Common myeloid progenitor, CD34-positive (primary cell): ENCODE measurements at regions of chr16 and their contacts with region 1.

Region 1: GRCh38 chr16:19517418-19518089 is 4.3 kb downstream of the GDE1 start:
- DNase-seq: peak in 2 of 3 donors; percentile 28 to 56
- H3K4me3 ChIP-seq: no peak overlapping the region
- H3K27ac ChIP-seq: no peak overlapping the region
- H3K4me1 ChIP-seq: peaks cover 13 to 38% (median 28%) of the 10 kb centered on the region in 4 experiments
- H3K27me3 ChIP-seq: no peaks in the 10 kb centered on the region

Region 2: GRCh38 chr16:19474617-19475016 is 42.9 kb before region 1 on chr16:
- CTCF ChIA-PET with region 1: no interaction called
- POLR2A ChIA-PET with region 1: no interaction called
- DNase-seq: no peak
- H3K4me3 ChIP-seq: no peak overlapping the region
- H3K27ac ChIP-seq: no peak overlapping the region
- H3K4me1 ChIP-seq: no peaks in the 10 kb centered on the region
- H3K27me3 ChIP-seq: peaks cover 0 to 2% (median 0%) of the 10 kb centered on the region in 5 experiments

Region 3: DNA sequence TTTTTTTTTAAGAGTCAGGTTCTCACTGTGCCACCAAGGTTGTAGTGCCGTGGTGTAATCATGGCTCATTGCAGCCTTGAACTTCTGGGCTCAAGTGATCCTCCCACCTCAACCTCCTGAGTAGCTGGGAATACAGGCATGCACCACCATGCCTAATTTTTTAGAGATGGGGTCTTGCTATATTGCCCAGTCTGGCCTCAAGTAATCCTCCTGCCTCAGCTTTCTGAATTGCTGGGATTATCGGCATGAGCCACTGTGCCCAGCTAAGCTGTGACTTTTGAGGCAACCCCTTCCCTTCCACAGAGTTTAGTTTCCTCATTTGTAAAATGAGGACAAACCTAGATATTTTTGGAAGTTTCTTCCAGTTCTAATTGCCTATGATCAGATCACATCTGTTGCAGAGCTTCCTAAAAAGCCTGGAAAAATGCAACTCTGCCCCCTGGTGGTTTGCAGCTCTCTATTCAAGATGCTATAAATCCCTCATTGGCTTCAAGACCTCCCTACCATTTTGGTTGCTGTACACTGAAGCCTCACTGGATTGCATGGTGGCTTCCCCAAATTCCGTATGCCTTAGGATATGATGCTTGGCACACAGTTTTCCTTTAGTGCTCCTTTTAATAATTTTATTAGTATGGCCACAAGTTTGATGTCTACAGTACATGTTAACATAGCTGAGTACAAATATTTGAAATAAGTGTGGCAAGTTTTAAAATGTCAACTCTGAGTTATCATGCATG is 15.0 kb before region 1 on chr16:
- CTCF ChIA-PET with region 1: interaction called, 36 read pairs
- POLR2A ChIA-PET with region 1: no interaction called
- DNase-seq: peak; percentile 79 to 89 (median 83)
- H3K4me3 ChIP-seq: no peak overlapping the region
- H3K27ac ChIP-seq: no peak overlapping the region
- H3K4me1 ChIP-seq: no peaks in the 10 kb centered on the region
- H3K27me3 ChIP-seq: no peaks in the 10 kb centered on the region